ENCODE measurements at regions of chr6 and their contacts with region 1.

Region 1: GRCh38 chr6:37860226-37860839 is 40.8 kb downstream of the ZFAND3 start:
- DNase-seq: peak; percentile 7 to 41 (median 12)
- H3K4me3 ChIP-seq: no peak overlapping the region
- H3K4me3 Mint-ChIP-seq: no peak overlapping the region
- H3K27ac ChIP-seq: no peak overlapping the region
- H3K27ac Mint-ChIP-seq: peak overlapping the region in 2 of 7 donors; percentile 19 to 68
- H3K4me1 ChIP-seq: peaks cover 30% of the 10 kb centered on the region
- H3K4me1 Mint-ChIP-seq: peaks cover 38 to 65% (median 46%) of the 10 kb centered on the region in 4 donors
- H3K27me3 ChIP-seq: no peaks in the 10 kb centered on the region
- H3K27me3 Mint-ChIP-seq: no peaks in the 10 kb centered on the region

Region 2: DNA sequence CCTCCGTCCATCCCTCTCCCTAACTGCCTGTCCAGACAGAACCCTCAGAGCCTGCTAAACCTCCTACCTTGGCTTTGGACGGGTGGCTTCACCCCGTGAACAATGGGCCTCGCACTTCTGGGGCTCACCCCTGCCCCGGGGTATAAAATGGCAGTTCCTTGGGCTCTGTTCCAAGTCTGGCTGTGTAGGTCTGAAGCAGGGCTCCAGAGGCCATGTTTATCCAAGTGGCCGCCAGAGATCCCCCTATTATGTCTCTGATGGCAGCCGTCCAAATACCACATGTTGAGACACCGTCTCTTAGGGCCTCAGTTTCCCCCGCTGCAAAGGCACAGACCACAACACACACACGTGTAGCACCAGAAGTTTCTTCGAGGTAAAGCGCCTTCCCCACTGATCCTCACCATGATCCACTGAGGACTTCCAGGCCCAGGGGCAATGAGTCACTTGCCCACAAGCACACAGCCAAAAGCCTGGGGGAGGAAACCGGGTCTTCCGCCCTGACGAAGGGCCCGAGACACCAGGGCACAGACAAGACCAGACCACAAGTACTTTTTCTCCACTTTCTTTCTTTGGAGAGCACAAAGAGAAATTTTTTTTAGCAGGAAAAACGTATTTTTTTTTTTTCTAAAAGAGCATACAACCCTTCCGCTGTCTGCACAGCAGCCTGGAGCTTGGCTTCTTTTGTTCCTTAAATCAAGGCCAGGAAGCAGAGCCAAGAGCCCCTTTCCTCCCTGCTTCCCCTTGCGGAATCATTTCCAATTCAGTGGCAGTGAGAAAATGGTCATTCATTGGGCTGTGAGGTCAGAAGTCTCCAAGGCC is 1032.9 kb before region 1 on chr6:
- CTCF ChIA-PET with region 1: no interaction called
- POLR2A ChIA-PET with region 1: no interaction called
- intact Hi-C with region 1: no loop called
- DNase-seq: no peak
- H3K4me3 ChIP-seq: no peak overlapping the region
- H3K4me3 Mint-ChIP-seq: peak overlapping the region in 1 of 8 donors; percentile 34
- H3K27ac ChIP-seq: no peak overlapping the region
- H3K27ac Mint-ChIP-seq: peak overlapping the region in 1 of 7 donors; percentile 17
- H3K4me1 ChIP-seq: no peaks in the 10 kb centered on the region
- H3K4me1 Mint-ChIP-seq: peaks cover 0 to 7% (median 4%) of the 10 kb centered on the region in 4 donors
- H3K27me3 ChIP-seq: no peaks in the 10 kb centered on the region
- H3K27me3 Mint-ChIP-seq: peaks cover 0 to 4% of the 10 kb centered on the region in 2 donors

Region 3: GRCh38 chr6:37826188-37826587 is 34.1 kb before region 1 on chr6:
- CTCF ChIA-PET with region 1: interaction called, 14 read pairs
- POLR2A ChIA-PET with region 1: no interaction called
- intact Hi-C with region 1: no loop called
- DNase-seq: no peak
- H3K4me3 ChIP-seq: no peak overlapping the region
- H3K4me3 Mint-ChIP-seq: peak overlapping the region in 2 of 8 donors; percentile 31 to 51
- H3K27ac ChIP-seq: no peak overlapping the region
- H3K27ac Mint-ChIP-seq: peak overlapping the region in 2 of 7 donors; percentile 11 to 50
- H3K4me1 ChIP-seq: peaks cover 63% of the 10 kb centered on the region
- H3K4me1 Mint-ChIP-seq: peaks cover 53 to 86% (median 71%) of the 10 kb centered on the region in 4 donors
- H3K27me3 ChIP-seq: no peaks in the 10 kb centered on the region
- H3K27me3 Mint-ChIP-seq: no peaks in the 10 kb centered on the region

Measured in CD4-positive, alpha-beta memory T cell (primary cell).